Endothelial cell of umbilical vein (primary cell): ENCODE measurements at regions of chr6 and their contacts with region 1.

Region 1: GRCh38 chr6:138987640-138988468 is at the start of gene REPS1:
- DNase-seq: peak; percentile 84
- H3K4me3 ChIP-seq: peak within 1 kb of the TSS; percentile 52 to 97 (median 66)
- H3K27ac ChIP-seq: peak within 1 kb of the TSS; percentile 58
- H3K4me1 ChIP-seq: peaks cover 12% of the 10 kb centered on the region
- H3K27me3 ChIP-seq: peaks cover 0 to 3% of the 10 kb centered on the region in 2 experiments
- CTCF ChIP-seq: peak; percentile 90 to 95
- POLR2A ChIP-seq: peak; percentile 69
- total RNA-seq, gene REPS1: 26.3 and 35.0 TPM in 2 replicates

Region 2: DNA sequence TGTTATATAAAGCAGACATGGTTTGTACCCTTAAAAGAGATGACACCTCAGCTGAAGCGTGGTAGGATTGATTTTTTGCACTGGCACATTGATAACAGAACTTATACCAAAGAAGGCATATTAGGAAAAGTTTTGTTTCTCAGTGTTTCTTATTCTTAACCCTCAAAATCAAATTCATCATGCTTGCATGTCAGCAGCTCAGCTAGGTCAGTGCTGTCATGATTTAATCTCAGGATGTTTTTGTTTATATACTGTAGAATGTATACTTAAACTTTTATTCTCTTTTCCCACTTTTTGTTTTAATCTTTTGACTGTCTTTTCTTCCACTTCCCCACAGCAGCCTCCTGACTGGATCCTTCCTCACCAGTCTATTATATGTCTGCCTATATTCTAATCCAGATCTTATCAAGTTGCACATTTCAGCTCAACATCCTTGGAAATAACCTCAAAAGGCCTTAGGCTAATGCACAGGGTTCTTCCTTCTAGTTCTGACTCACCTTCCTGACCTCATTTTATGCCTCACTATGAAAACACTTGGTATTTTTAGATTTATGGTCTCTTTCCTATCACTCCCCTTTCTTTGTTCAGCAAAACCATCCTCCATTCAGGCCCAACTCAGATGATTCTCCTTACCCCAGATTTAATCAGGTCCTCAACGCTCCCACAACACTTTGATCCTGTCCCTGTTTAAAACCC is 576.7 kb before region 1 on chr6:
- CTCF ChIA-PET with region 1: no interaction called
- POLR2A ChIA-PET with region 1: no interaction called
- dilution Hi-C with region 1: no loop called
- intact Hi-C with region 1: loop called (anchors 5 kb)
- DNase-seq: peak; percentile 91
- H3K4me3 ChIP-seq: no peak overlapping the region
- H3K27ac ChIP-seq: peak overlapping the region; percentile 98
- H3K4me1 ChIP-seq: peaks cover 26% of the 10 kb centered on the region
- H3K27me3 ChIP-seq: no peaks in the 10 kb centered on the region
- CTCF ChIP-seq: no peak
- POLR2A ChIP-seq: peak; percentile 68

Region 3: GRCh38 chr6:138692058-138692977 is 295.5 kb before region 1 on chr6:
- CTCF ChIA-PET with region 1: no interaction called
- POLR2A ChIA-PET with region 1: no interaction called
- dilution Hi-C with region 1: no loop called
- intact Hi-C with region 1: loop called (anchors 1 kb)
- DNase-seq: peak; percentile 68
- H3K4me3 ChIP-seq: peak overlapping the region; percentile 74 to 90 (median 75)
- H3K27ac ChIP-seq: peak overlapping the region; percentile 46
- H3K4me1 ChIP-seq: peaks cover 25% of the 10 kb centered on the region
- H3K27me3 ChIP-seq: no peaks in the 10 kb centered on the region
- CTCF ChIP-seq: peak; percentile 82 to 93
- POLR2A ChIP-seq: no peak

Region 4: DNA sequence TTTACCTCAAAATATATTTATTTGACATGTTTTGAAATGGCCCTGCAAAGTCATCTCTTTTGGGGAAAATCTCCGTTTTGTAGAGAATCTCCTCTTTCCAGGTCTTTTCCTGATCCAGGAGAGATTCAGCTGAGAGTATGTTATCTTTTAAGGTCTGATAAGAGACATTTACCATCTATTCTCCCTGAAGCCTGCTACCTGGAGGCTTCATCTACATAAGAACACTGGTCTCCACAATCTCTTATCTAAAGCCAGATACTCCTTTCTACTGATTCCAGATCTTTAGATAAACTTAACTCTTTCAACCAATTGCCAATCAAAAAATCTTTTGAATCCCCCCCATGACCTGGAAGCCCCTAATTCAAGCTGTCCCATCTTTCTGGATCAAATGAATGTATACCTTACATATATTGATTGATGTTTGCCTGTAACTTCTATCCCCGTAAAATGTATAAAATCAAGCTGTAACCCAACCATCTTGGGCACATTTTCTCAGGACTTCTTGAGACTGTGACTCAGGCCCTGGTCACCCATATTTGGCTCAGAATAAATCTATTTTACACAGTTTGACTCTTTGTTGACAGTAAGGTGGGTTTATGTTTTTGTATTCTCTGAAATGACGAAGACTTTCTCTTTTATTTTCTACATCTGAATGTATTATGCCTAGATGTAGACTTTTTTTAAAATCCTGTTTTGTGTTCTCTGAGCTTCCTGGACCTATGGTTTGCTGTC is 96.4 kb before region 1 on chr6:
- CTCF ChIA-PET with region 1: no interaction called
- POLR2A ChIA-PET with region 1: no interaction called
- dilution Hi-C with region 1: no loop called
- intact Hi-C with region 1: loop called (anchors 5 kb)
- DNase-seq: no peak
- H3K4me3 ChIP-seq: no peak overlapping the region
- H3K27ac ChIP-seq: no peak overlapping the region
- H3K4me1 ChIP-seq: no peaks in the 10 kb centered on the region
- H3K27me3 ChIP-seq: no peaks in the 10 kb centered on the region
- CTCF ChIP-seq: no peak
- POLR2A ChIP-seq: no peak

Region 5: GRCh38 chr6:138970856-138971425 is 16.9 kb before region 1 on chr6:
- CTCF ChIA-PET with region 1: interaction called, 31 read pairs
- POLR2A ChIA-PET with region 1: interaction called, 3 read pairs
- dilution Hi-C with region 1: no loop called
- intact Hi-C with region 1: loop called (anchors 1 kb)
- DNase-seq: peak; percentile 85
- H3K4me3 ChIP-seq: peak overlapping the region in 1 of 3 experiments; percentile 27
- H3K27ac ChIP-seq: peak overlapping the region; percentile 91
- H3K4me1 ChIP-seq: peaks cover 48% of the 10 kb centered on the region
- H3K27me3 ChIP-seq: no peaks in the 10 kb centered on the region
- CTCF ChIP-seq: no peak
- POLR2A ChIP-seq: no peak